Heart right ventricle (tissue), 16 donors: ENCODE measurements at regions of chr9 and their contacts with region 1.

Region 1: GRCh38 chr9:22105005-22105722 is 96.1 kb upstream of the CDKN2B start:
- DNase-seq: no peak
- ATAC-seq: no peak
- H3K4me3 ChIP-seq: no peak overlapping the region
- H3K27ac ChIP-seq: no peak overlapping the region
- H3K4me1 ChIP-seq: peaks cover 0 to 14% (median 7%) of the 10 kb centered on the region in 9 donors
- H3K27me3 ChIP-seq: no peaks in the 10 kb centered on the region
- CTCF ChIP-seq: no peak

Region 2: DNA sequence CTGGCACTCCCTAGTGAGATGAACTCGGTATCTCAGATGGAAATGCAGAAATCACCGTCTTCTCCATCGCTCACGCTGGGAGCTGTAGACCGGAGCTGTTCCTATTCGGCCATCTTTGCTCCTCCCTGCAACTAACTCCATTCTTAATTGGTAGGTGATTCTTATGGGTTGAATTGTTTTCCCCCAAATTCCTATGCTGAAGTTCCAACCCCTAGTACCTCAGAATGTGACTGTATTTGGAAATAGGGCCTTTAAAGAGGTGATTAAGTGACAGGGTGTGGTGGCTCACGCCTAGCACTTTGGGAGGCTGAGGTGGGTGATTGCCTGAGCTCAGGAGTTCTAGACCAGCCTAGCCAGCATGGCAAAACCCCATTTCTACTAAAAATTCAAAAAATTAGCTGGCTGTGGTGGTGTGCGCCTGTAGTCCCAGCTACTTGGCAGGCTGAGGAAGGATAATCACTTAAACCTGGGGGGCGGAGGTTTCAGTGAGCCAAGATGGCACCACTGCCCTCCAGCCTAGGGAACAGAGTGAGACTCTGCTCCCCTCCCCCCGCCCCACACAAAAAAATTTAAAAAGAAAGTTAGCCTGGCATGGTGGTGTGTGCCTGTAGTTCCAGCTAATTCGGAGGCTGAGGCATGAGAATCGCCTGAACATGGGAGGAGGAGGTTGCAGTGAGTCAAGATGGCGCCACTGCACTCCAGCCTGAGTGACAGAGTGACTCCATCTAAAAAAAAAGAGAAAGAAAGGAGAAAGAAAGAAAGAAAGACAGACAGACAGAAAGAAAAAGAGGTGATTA is 1446.3 kb before region 1 on chr9:
- intact Hi-C with region 1: loop called in 1 of 10 experiments (anchors 10 kb)
- DNase-seq: no peak
- ATAC-seq: peak in 2 of 8 donors; percentile 19 to 55
- H3K4me3 ChIP-seq: peak overlapping the region; percentile 11 to 63 (median 55)
- H3K27ac ChIP-seq: peak overlapping the region in 6 of 10 donors; percentile 8 to 58 (median 26)
- H3K4me1 ChIP-seq: peaks cover 0 to 31% (median 4%) of the 10 kb centered on the region in 9 donors
- H3K27me3 ChIP-seq: no peaks in the 10 kb centered on the region
- CTCF ChIP-seq: no peak

Region 3: GRCh38 chr9:21902136-21902535 is 203.0 kb before region 1 on chr9:
- intact Hi-C with region 1: no loop called
- DNase-seq: no peak
- ATAC-seq: no peak
- H3K4me3 ChIP-seq: no peak overlapping the region
- H3K27ac ChIP-seq: no peak overlapping the region
- H3K4me1 ChIP-seq: no peaks in the 10 kb centered on the region
- H3K27me3 ChIP-seq: no peaks in the 10 kb centered on the region
- CTCF ChIP-seq: no peak

Region 4: DNA sequence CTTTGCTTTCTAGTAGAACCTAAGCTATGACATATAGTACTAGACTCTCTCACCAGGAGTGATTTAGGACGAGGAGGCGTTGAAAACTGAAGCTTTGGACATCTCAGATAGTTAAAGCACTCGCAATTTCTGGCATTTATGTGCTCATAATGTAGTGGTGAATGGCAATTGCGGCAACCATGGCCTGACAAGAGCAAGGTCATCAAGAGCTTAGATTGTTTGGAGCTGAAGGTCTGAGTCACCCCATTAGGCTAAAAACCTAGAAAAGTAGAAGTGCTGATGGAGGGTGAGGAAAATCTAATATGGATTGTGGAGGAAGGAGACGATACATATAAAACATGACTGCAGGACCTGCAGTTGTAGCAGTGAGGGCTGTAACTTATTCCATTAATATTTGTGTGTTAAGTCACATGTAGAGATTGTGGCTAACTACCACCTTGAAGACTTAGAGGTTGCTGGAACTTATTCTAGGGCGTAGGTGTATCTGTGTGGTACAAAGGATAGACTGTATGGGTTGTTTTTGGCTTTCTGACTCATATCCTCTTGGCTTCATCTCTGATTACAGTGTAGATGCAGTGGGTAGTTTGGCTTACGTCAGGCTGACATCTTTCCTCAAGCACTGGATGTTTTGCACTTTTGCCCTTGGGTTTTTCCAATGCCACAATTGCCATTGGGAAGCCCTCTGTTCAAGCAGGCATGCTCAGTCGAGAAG is 42.8 kb after region 1 on chr9:
- intact Hi-C with region 1: no loop called
- DNase-seq: no peak
- ATAC-seq: peak in 3 of 8 donors; percentile 55 to 77 (median 73)
- H3K4me3 ChIP-seq: no peak overlapping the region
- H3K27ac ChIP-seq: peak overlapping the region in 1 of 10 donors; percentile 12
- H3K4me1 ChIP-seq: peaks cover 0 to 37% (median 0%) of the 10 kb centered on the region in 9 donors
- H3K27me3 ChIP-seq: no peaks in the 10 kb centered on the region
- CTCF ChIP-seq: no peak